Esophagus squamous epithelium (tissue), 5 donors: ENCODE measurements at regions of chr21 and their contacts with region 1.

Region 1: GRCh38 chr21:44428281-44428942 is 26.9 kb upstream of the LRRC3 start:
- DNase-seq: no peak
- H3K4me3 ChIP-seq: no peak overlapping the region
- H3K27ac ChIP-seq: no peak overlapping the region
- H3K4me1 ChIP-seq: no peaks in the 10 kb centered on the region
- H3K27me3 ChIP-seq: peaks cover 0 to 34% (median 0%) of the 10 kb centered on the region in 4 donors
- CTCF ChIP-seq: no peak
- POLR2A ChIP-seq: no peak

Region 2: DNA sequence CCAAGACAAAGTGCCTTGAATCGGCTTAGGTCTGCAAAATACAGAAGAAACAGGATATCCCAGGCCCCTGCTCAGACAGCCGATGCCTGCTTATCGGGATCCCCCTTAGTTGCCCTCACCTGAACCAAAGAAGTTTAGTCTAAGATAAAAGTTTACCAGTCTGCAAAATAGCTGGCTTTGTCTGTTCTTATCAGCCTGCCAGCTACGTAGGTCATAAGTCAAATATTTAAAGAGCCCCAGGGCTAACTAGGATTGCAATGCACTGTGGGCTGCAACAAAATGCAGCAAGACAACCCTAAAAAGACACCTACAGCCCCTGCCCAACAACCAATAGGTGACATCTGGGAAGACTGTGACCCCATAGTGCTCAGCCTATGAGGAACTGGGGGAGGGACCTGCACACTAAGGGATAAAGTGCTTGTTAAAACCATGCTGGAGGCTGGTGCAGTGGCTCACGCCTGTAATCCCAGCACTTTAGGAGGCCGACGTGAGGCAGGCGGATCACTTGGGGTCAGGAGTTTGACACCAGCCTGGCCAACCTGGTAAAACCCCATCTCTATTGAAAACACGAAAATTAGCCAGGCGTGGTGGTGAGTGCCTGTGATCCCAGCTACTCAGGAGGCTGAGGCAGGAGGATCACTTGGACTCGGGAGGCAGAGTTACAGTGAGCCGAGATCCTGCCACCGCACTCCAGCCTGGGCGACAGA is 54.3 kb after region 1 on chr21:
- intact Hi-C with region 1: loop called (anchors 5 kb)
- DNase-seq: no peak
- H3K4me3 ChIP-seq: no peak overlapping the region
- H3K27ac ChIP-seq: no peak overlapping the region
- H3K4me1 ChIP-seq: no peaks in the 10 kb centered on the region
- H3K27me3 ChIP-seq: peaks cover 0 to 35% (median 0%) of the 10 kb centered on the region in 4 donors
- CTCF ChIP-seq: no peak
- POLR2A ChIP-seq: no peak